Activated T-helper 2 cell treated with anti-CD3 and anti-CD28 coated beads, Interferon-gamma antibody, Interleukin-2, Interleukin-4, amounts not matched to agents 10 μg/mL and 5 μg/mL and 100 μg/mL, durations not matched to agents 14 hours and 24 hours and 36 hours (primary cell): ENCODE measurements at regions of chr18 and their contacts with region 1.

Region 1: GRCh38 chr18:79679111-79679872 is at the start of gene CTDP1:
- DNase-seq: peak; percentile 98
- H3K4me3 Mint-ChIP-seq: peak within 1 kb of the TSS; percentile 92
- H3K27ac Mint-ChIP-seq: peak within 1 kb of the TSS; percentile 98
- H3K4me1 Mint-ChIP-seq: peaks cover 57% of the 10 kb centered on the region
- H3K27me3 Mint-ChIP-seq: no peaks in the 10 kb centered on the region
- total RNA-seq, gene CTDP1: 42.0 and 43.3 TPM in 2 replicates

Region 2: DNA sequence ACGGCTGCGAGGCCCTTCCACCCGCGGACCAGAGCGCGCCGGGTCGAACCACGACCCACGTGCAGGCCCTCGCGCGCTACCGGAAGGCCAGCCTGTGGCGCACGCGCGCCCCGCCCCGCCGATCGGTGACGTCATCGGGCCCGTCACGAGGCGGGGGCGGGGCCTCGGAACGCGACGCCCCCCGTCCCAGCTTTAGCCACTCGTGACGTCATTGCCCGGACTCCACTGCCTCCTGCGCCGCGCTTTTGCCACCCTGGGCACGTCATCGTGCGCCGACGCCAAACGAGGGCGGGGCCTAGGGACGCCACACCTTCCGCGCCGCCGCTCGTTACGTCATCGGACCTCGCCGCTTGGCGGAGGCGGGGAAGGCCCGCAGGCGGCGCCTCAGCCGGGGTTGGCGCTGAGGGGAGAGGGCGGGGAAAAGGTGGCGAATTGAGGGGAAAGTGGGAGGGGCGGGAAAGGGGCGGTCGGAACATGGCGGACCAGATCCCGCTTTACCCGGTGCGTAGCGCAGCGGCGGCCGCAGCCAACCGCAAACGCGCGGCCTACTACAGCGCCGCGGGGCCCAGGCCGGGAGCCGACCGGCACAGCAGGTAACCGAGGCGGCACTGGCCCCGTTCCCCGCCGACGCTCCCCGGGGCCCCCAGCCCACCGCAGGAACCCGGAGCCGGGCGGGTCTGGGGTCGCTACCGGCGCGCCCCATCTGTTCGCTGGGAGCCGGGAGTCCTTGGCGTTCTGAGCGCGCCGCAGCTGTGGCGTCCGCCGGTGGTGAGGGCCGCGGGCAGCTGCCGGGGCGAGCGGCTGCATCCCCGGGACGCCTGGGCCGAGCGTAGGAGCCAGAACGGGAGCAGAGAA is 610.1 kb before region 1 on chr18 and contains the start of gene ATP9B:
- intact Hi-C with region 1: loop called (anchors 1 kb)
- DNase-seq: peak; percentile 98
- H3K4me3 Mint-ChIP-seq: peak within 1 kb of the TSS; percentile 87
- H3K27ac Mint-ChIP-seq: peak within 1 kb of the TSS; percentile 98
- H3K4me1 Mint-ChIP-seq: peaks cover 26% of the 10 kb centered on the region
- H3K27me3 Mint-ChIP-seq: peaks cover 20% of the 10 kb centered on the region
- total RNA-seq, gene ATP9B: 27.6 and 29.8 TPM in 2 replicates

Region 3: GRCh38 chr18:79738581-79739439 is 59.5 kb after region 1 on chr18:
- intact Hi-C with region 1: no loop called
- DNase-seq: no peak
- H3K4me3 Mint-ChIP-seq: no peak overlapping the region
- H3K27ac Mint-ChIP-seq: no peak overlapping the region
- H3K4me1 Mint-ChIP-seq: no peaks in the 10 kb centered on the region
- H3K27me3 Mint-ChIP-seq: no peaks in the 10 kb centered on the region

Region 4: DNA sequence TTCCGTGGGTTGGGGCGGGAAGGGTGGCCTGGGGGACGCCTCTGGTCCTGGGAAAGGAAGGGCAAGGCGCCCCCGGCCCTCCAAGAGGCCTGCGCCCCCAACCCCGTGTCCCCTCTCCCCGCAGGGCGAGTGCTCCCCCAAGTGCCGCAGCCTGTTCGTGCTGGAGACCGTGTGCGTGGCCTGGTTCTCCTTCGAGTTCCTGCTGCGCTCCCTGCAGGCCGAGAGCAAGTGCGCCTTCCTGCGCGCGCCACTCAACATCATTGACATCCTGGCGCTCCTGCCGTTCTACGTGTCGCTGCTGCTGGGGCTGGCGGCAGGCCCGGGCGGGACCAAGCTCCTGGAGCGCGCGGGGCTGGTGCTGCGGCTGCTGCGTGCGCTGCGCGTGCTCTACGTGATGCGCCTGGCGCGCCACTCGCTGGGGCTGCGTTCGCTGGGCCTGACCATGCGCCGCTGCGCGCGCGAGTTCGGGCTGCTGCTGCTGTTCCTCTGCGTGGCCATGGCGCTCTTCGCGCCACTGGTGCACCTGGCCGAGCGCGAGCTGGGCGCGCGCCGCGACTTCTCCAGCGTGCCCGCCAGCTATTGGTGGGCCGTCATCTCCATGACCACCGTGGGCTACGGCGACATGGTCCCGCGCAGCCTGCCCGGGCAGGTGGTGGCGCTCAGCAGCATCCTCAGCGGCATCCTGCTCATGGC is 219.8 kb after region 1 on chr18:
- intact Hi-C with region 1: loop called (anchors 10 kb)
- DNase-seq: no peak
- H3K4me3 Mint-ChIP-seq: no peak overlapping the region
- H3K27ac Mint-ChIP-seq: no peak overlapping the region
- H3K4me1 Mint-ChIP-seq: peaks cover 2% of the 10 kb centered on the region
- H3K27me3 Mint-ChIP-seq: no peaks in the 10 kb centered on the region

Region 5: GRCh38 chr18:79988451-79989194 is 309.3 kb after region 1 on chr18 and contains the start of gene TXNL4A:
- intact Hi-C with region 1: loop called (anchors 1 kb)
- DNase-seq: peak; percentile 80
- H3K4me3 Mint-ChIP-seq: peak within 1 kb of the TSS; percentile 96
- H3K27ac Mint-ChIP-seq: peak within 1 kb of the TSS; percentile 95
- H3K4me1 Mint-ChIP-seq: peaks cover 28% of the 10 kb centered on the region
- H3K27me3 Mint-ChIP-seq: no peaks in the 10 kb centered on the region
- total RNA-seq, gene TXNL4A: 181 and 194 TPM in 2 replicates

Region 6: DNA sequence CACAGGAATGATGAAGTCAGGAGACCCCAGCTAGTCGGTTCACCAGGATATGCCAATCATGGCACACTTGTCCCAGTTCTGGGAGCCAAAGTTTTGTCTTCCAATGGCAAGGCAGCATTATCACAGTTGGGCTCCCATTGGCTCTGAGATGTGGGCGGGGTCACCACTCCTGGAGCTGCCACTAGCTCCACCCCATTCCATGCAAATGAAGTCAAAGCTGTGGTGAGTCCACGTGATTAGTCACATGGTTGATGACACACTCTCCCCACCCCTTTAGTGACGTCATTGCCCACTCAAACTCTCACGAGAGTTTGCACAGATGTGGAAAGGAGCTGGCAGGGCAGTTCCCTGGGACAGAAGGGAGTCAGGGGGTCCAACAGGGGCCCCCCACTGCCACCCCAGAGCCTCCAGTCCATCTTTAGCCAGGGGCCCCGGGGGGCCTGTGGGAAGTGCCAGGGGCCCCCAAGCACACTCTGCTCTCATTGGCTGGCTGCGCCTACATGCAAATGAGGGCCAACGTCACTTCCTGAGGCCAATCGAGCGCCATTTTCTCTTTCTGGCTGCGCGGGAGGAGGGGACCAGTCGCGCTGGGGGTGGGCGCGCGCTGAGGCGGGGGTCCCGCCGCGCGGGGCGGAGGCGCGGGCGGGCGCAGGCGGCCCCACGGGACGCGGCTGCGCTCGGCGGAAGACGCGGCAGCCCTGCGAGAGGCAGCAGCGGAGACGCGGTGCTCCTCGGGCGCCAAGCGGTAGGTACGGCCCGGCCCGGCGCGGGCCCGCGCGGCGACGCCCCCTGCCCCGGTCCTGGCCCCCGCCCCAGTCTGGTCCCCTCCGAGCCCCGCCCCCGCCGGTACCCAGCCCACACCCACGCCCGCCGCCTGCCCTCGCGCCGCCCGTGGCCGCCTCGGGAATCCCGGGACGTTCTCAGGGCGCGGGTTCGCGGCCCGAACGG is 429.7 kb after region 1 on chr18 and contains the start of gene ADNP2:
- intact Hi-C with region 1: loop called (anchors 5 kb)
- DNase-seq: peak; percentile 80
- H3K4me3 Mint-ChIP-seq: peak within 1 kb of the TSS; percentile 84
- H3K27ac Mint-ChIP-seq: peak within 1 kb of the TSS; percentile 82
- H3K4me1 Mint-ChIP-seq: peaks cover 34% of the 10 kb centered on the region
- H3K27me3 Mint-ChIP-seq: no peaks in the 10 kb centered on the region
- total RNA-seq, gene ADNP2: 28.1 and 28.9 TPM in 2 replicates